ENCODE measurements at regions of chr5 and their contacts with region 1.

Region 1: GRCh38 chr5:76736679-76737556 is 21.0 kb downstream of the F2R start:
- DNase-seq: no peak
- ATAC-seq: no peak
- H3K4me3 Mint-ChIP-seq: no peak overlapping the region
- H3K27ac Mint-ChIP-seq: no peak overlapping the region
- H3K4me1 Mint-ChIP-seq: peaks cover 24% of the 10 kb centered on the region
- H3K27me3 Mint-ChIP-seq: no peaks in the 10 kb centered on the region

Region 2: GRCh38 chr5:76691467-76692138 is 45.3 kb before region 1 on chr5:
- CTCF ChIA-PET with region 1: interaction called, 3 read pairs
- POLR2A ChIA-PET with region 1: no interaction called
- intact Hi-C with region 1: loop called in 1 of 2 experiments (anchors 1 kb)
- DNase-seq: no peak
- ATAC-seq: peak; percentile 95
- H3K4me3 Mint-ChIP-seq: peak overlapping the region; percentile 28
- H3K27ac Mint-ChIP-seq: peak overlapping the region; percentile 63
- H3K4me1 Mint-ChIP-seq: peaks cover 23% of the 10 kb centered on the region
- H3K27me3 Mint-ChIP-seq: no peaks in the 10 kb centered on the region

Region 3: DNA sequence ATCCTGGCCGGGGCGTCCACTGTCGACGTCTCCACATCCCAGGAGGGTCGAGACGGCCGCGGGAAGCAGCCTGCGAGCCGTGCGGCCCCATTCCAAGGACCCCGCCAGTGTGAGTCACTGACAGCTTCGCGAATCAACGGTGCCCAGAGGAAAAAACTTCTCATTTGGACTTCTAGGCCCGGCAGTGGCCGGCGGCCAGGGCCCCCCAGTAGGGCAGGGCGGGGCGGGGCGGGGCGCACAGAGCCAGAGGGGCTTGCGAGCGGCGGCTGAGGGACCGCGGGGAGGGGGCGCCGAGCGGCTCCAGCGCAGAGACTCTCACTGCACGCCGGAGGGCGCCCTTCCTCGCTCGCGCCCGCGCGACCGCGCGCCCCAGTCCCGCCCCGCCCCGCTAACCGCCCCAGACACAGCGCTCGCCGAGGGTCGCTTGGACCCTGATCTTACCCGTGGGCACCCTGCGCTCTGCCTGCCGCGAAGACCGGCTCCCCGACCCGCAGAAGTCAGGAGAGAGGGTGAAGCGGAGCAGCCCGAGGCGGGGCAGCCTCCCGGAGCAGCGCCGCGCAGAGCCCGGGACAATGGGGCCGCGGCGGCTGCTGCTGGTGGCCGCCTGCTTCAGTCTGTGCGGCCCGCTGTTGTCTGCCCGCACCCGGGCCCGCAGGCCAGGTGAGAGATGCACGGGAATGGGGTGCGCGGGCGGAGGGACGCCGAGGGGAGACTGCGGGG is 21.0 kb before region 1 on chr5 and contains the start of gene F2R:
- CTCF ChIA-PET with region 1: interaction called, 5 read pairs
- POLR2A ChIA-PET with region 1: no interaction called
- intact Hi-C with region 1: loop called (anchors 1 to 2 kb)
- DNase-seq: peak; percentile 72
- ATAC-seq: peak; percentile 79
- H3K4me3 Mint-ChIP-seq: peak within 1 kb of the TSS; percentile 75
- H3K27ac Mint-ChIP-seq: no peak within 1 kb of the TSS
- H3K4me1 Mint-ChIP-seq: peaks cover 22% of the 10 kb centered on the region
- H3K27me3 Mint-ChIP-seq: peaks cover 38% of the 10 kb centered on the region
- total RNA-seq, gene F2R: 1.4 TPM

Region 4: GRCh38 chr5:76790632-76791290 is 53.8 kb after region 1 on chr5:
- CTCF ChIA-PET with region 1: no interaction called
- POLR2A ChIA-PET with region 1: no interaction called
- intact Hi-C with region 1: loop called in 1 of 2 experiments (anchors 2 kb)
- DNase-seq: peak; percentile 24
- ATAC-seq: peak; percentile 87
- H3K4me3 Mint-ChIP-seq: no peak overlapping the region
- H3K27ac Mint-ChIP-seq: peak overlapping the region; percentile 59
- H3K4me1 Mint-ChIP-seq: peaks cover 21% of the 10 kb centered on the region
- H3K27me3 Mint-ChIP-seq: no peaks in the 10 kb centered on the region

Measured in activated CD4-positive, alpha-beta T cell treated with anti-CD3 and anti-CD28 coated beads for 36 hours (primary cell).